ENCODE measurements at regions of chr12 and their contacts with region 1.

Region 1: GRCh38 chr12:26832822-26833742 is at the start of gene ITPR2:
- DNase-seq: peak; percentile 88 to 92 (median 89)
- H3K4me3 ChIP-seq: peak within 1 kb of the TSS; percentile 90 to 91
- H3K4me3 Mint-ChIP-seq: peak within 1 kb of the TSS; percentile 97 to 99 (median 99)
- H3K27ac ChIP-seq: peak within 1 kb of the TSS; percentile 69
- H3K27ac Mint-ChIP-seq: peak within 1 kb of the TSS; percentile 96 to 99 (median 99)
- H3K4me1 ChIP-seq: peaks cover 25% of the 10 kb centered on the region
- H3K4me1 Mint-ChIP-seq: peaks cover 31 to 55% (median 41%) of the 10 kb centered on the region in 4 donors
- H3K27me3 ChIP-seq: no peaks in the 10 kb centered on the region
- H3K27me3 Mint-ChIP-seq: no peaks in the 10 kb centered on the region
- total RNA-seq, gene ITPR2: 54.7 to 55.6 TPM

Region 2: GRCh38 chr12:26719852-26720251 is 113.2 kb before region 1 on chr12:
- CTCF ChIA-PET with region 1: no interaction called
- POLR2A ChIA-PET with region 1: no interaction called
- intact Hi-C with region 1: loop called (anchors 5 kb)
- DNase-seq: no peak
- H3K4me3 ChIP-seq: no peak overlapping the region
- H3K4me3 Mint-ChIP-seq: no peak overlapping the region
- H3K27ac ChIP-seq: no peak overlapping the region
- H3K27ac Mint-ChIP-seq: no peak overlapping the region
- H3K4me1 ChIP-seq: no peaks in the 10 kb centered on the region
- H3K4me1 Mint-ChIP-seq: peaks cover 0 to 1% (median 0%) of the 10 kb centered on the region in 4 donors
- H3K27me3 ChIP-seq: no peaks in the 10 kb centered on the region
- H3K27me3 Mint-ChIP-seq: no peaks in the 10 kb centered on the region

Region 3: GRCh38 chr12:26845057-26845666 is 12.1 kb after region 1 on chr12:
- CTCF ChIA-PET with region 1: interaction called, 25 read pairs
- POLR2A ChIA-PET with region 1: interaction called, 3 read pairs
- intact Hi-C with region 1: loop called (anchors 1 kb)
- DNase-seq: peak in 1 of 5 donors; percentile 16
- H3K4me3 ChIP-seq: no peak overlapping the region
- H3K4me3 Mint-ChIP-seq: no peak overlapping the region
- H3K27ac ChIP-seq: no peak overlapping the region
- H3K27ac Mint-ChIP-seq: no peak overlapping the region
- H3K4me1 ChIP-seq: no peaks in the 10 kb centered on the region
- H3K4me1 Mint-ChIP-seq: peaks cover 0 to 2% (median 0%) of the 10 kb centered on the region in 4 donors
- H3K27me3 ChIP-seq: no peaks in the 10 kb centered on the region
- H3K27me3 Mint-ChIP-seq: peaks cover 7 to 14% of the 10 kb centered on the region in 2 donors

Region 4: GRCh38 chr12:26884765-26885576 is 51.9 kb after region 1 on chr12:
- CTCF ChIA-PET with region 1: interaction called, 23 read pairs
- POLR2A ChIA-PET with region 1: no interaction called
- intact Hi-C with region 1: loop called (anchors 2 kb)
- DNase-seq: peak; percentile 77 to 82 (median 82)
- H3K4me3 ChIP-seq: no peak overlapping the region
- H3K4me3 Mint-ChIP-seq: peak overlapping the region; percentile 40 to 80 (median 67)
- H3K27ac ChIP-seq: no peak overlapping the region
- H3K27ac Mint-ChIP-seq: peak overlapping the region in 3 of 7 donors; percentile 42 to 60 (median 53)
- H3K4me1 ChIP-seq: peaks cover 4% of the 10 kb centered on the region
- H3K4me1 Mint-ChIP-seq: peaks cover 5 to 8% (median 7%) of the 10 kb centered on the region in 4 donors
- H3K27me3 ChIP-seq: no peaks in the 10 kb centered on the region
- H3K27me3 Mint-ChIP-seq: peaks cover 2 to 3% of the 10 kb centered on the region in 2 donors

Region 5: GRCh38 chr12:27024291-27024690 is 191.2 kb after region 1 on chr12:
- CTCF ChIA-PET with region 1: interaction called, 4 read pairs
- POLR2A ChIA-PET with region 1: interaction called, 26 read pairs
- intact Hi-C with region 1: no loop called
- DNase-seq: no peak
- H3K4me3 ChIP-seq: no peak overlapping the region
- H3K4me3 Mint-ChIP-seq: peak overlapping the region in 6 of 8 donors; percentile 57 to 100 (median 98)
- H3K27ac ChIP-seq: no peak overlapping the region
- H3K27ac Mint-ChIP-seq: peak overlapping the region in 2 of 7 donors; percentile 23 to 98
- H3K4me1 ChIP-seq: peaks cover 30% of the 10 kb centered on the region
- H3K4me1 Mint-ChIP-seq: peaks cover 31 to 51% (median 37%) of the 10 kb centered on the region in 4 donors
- H3K27me3 ChIP-seq: no peaks in the 10 kb centered on the region
- H3K27me3 Mint-ChIP-seq: peaks cover 0 to 2% of the 10 kb centered on the region in 2 donors

Region 6: DNA sequence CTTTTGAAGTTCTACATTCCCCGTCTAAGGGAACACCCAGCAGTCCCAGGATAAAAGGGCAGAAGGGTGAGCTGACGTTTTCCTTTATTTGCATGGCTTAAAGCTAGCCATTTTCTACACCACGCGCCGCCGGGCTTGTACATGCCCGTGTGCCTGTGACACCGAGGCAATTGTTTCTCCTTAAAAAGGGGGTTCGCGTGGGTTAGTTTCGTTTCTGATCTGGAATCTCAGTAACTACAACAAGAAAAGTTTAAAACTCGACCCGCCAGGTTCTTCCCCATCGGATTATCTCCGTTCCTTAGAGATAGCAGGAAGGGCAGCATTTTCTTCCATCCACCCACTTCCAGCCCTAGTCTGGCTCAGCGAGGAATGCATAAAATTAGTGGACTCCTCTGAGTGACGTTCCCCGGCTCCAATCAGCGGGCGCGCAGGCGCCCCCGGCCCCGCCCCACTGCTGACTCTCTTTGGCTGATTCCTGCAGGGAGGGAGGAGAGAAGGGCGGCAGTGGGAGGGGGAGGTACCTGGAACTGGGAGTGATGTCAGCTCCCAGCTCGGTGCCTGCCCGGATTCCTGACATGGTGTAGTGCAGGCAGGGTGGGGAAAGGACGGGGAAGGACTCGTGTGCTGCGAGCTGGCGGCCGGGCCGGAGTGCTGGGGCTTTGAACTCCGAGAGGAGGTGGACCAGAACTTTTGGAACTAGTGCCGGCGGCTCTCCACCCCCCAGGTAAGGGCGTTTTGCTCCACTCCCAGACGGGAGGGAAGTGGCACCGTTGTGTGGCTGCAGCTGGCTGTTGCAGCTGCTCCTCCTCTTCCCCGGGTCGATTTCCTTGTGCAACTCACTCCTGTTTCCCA is 690.8 kb after region 1 on chr12 and contains the start of gene PPFIBP1:
- CTCF ChIA-PET with region 1: no interaction called
- POLR2A ChIA-PET with region 1: interaction called, 4 read pairs
- intact Hi-C with region 1: loop called (anchors 5 kb)
- DNase-seq: peak; percentile 84 to 96 (median 87)
- H3K4me3 ChIP-seq: peak within 1 kb of the TSS; percentile 39 to 98
- H3K4me3 Mint-ChIP-seq: peak within 1 kb of the TSS; percentile 96 to 99 (median 98)
- H3K27ac ChIP-seq: peak within 1 kb of the TSS; percentile 65
- H3K27ac Mint-ChIP-seq: peak within 1 kb of the TSS; percentile 92 to 97 (median 95)
- H3K4me1 ChIP-seq: peaks cover 17% of the 10 kb centered on the region
- H3K4me1 Mint-ChIP-seq: peaks cover 13 to 40% (median 27%) of the 10 kb centered on the region in 4 donors
- H3K27me3 ChIP-seq: no peaks in the 10 kb centered on the region
- H3K27me3 Mint-ChIP-seq: peaks cover 4% of the 10 kb centered on the region in 2 donors
- total RNA-seq, gene PPFIBP1: 5.2 to 6.5 TPM